ENCODE measurements at regions of chr10 and their contacts with region 1.

Region 1: GRCh38 chr10:122879339-122880273 is at the start of gene FAM24B:
- DNase-seq: peak; percentile 87 to 98 (median 94)
- ATAC-seq: peak; percentile 84
- H3K4me3 ChIP-seq: peak within 1 kb of the TSS; percentile 80
- H3K4me3 Mint-ChIP-seq: peak within 1 kb of the TSS; percentile 86
- H3K27ac ChIP-seq: peak within 1 kb of the TSS; percentile 70 to 75
- H3K27ac Mint-ChIP-seq: peak within 1 kb of the TSS; percentile 79
- H3K4me1 ChIP-seq: peaks cover 19% of the 10 kb centered on the region
- H3K4me1 Mint-ChIP-seq: peaks cover 55% of the 10 kb centered on the region
- H3K27me3 ChIP-seq: no peaks in the 10 kb centered on the region
- H3K27me3 Mint-ChIP-seq: no peaks in the 10 kb centered on the region
- CTCF ChIP-seq: no peak
- total RNA-seq, gene FAM24B: 6.8 to 7.1 TPM

Region 2: DNA sequence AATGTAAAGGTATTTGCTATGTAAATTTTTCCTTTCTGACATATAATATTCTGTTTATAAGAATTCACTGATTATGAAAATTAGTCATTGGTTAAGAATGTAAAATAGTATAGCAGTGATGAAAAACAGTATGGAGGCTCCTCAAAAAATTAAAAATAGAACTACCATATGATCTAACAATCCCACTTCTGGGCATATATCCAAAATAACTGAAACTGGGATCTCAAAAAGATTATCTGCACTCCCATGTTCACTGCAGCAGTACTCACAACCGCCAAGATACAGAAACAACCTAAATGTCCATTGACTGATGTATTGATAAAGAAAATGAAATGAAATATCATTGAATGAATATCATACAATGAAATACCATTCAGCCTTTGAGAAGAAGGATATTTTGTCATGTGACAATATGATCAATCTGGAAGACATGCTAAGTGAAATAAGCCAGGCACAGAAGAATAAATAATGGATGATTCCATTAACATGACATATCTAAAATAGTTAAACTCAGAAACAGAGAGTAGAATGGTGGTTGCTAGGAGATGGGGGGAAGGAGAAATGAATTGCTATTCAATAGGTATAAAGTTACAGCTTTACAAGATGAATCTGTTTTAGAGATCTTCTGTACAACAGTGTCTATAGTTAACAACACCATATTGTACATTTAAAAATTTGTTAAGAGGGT is 60.4 kb after region 1 on chr10:
- CTCF ChIA-PET with region 1: no interaction called
- POLR2A ChIA-PET with region 1: no interaction called
- intact Hi-C with region 1: no loop called
- DNase-seq: no peak
- ATAC-seq: no peak
- H3K4me3 ChIP-seq: no peak overlapping the region
- H3K4me3 Mint-ChIP-seq: no peak overlapping the region
- H3K27ac ChIP-seq: no peak overlapping the region
- H3K27ac Mint-ChIP-seq: no peak overlapping the region
- H3K4me1 ChIP-seq: no peaks in the 10 kb centered on the region
- H3K4me1 Mint-ChIP-seq: no peaks in the 10 kb centered on the region
- H3K27me3 ChIP-seq: no peaks in the 10 kb centered on the region
- H3K27me3 Mint-ChIP-seq: no peaks in the 10 kb centered on the region
- CTCF ChIP-seq: no peak

Region 3: DNA sequence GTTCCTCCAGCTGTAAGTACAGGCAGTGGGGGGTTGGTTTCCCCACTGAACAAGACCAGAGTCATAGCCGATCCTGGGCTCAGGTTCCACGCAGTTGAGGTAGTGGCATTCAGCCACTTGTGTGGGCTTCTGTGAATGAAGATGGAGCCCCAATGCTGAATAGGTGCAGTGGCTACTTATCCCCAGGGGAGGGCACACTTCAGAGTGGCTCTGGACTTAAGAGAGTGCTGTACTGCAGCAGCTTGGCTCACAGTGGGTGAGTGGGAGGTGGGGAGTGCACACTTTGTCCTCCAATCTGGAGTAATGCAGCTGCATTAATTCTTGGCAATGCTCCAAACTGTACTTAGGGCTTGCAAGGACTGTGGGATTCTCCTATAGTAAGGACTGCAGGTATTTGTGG is 356.5 kb after region 1 on chr10:
- CTCF ChIA-PET with region 1: no interaction called
- POLR2A ChIA-PET with region 1: interaction called, 6 read pairs
- intact Hi-C with region 1: loop called in 1 of 2 experiments (anchors 5 kb)
- DNase-seq: no peak
- ATAC-seq: no peak
- H3K4me3 ChIP-seq: no peak overlapping the region
- H3K4me3 Mint-ChIP-seq: no peak overlapping the region
- H3K27ac ChIP-seq: no peak overlapping the region
- H3K27ac Mint-ChIP-seq: no peak overlapping the region
- H3K4me1 ChIP-seq: peaks cover 9% of the 10 kb centered on the region
- H3K4me1 Mint-ChIP-seq: peaks cover 14% of the 10 kb centered on the region
- H3K27me3 ChIP-seq: no peaks in the 10 kb centered on the region
- H3K27me3 Mint-ChIP-seq: no peaks in the 10 kb centered on the region
- CTCF ChIP-seq: no peak

Measured in CD4-positive, alpha-beta T cell (primary cell).